GM10248 (cell line): ENCODE measurements at regions of chr2 and their contacts with region 1.

Region 1: DNA sequence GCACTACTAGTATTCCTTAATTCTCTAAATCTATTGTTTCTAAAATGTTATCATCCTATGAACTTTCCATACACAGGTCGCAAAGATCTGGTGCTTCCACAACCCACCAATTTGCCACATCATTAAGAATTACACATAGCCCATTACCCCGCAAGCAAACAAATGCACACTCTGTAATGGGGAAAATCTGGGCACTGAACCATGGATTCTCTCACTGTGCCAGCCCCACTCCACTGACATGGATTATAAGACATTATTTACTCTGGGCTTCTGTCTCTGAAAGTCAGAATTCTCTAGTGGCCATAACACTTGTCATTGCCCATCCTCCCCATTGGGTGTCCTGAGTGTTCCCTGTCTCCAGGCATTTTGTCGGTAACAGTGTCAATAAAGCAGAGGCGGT is 537.1 kb downstream of the EPHA4 start:
- DNase-seq: no peak
- CTCF ChIP-seq: no peak

Region 2: DNA sequence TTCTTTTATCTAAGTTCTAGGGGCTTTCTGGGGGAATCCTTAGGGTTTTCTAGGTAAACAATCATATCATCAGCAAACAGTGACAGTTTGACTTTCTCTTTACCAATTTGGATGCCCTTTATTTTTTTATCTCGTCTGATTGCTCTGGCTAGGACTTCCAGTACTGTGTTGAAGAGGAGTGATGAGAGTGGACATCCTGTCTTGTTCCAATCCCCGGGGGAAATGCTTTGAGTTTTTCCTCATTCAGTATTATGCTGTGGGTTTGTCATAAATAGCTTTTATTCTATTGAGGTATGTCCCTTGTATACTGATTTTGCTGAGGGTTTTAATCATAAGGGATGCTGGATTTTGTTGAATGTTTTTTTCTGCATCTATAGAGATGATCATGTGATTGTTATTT is 12.4 kb before region 1 on chr2:
- CTCF ChIA-PET with region 1: interaction called, 13 read pairs
- POLR2A ChIA-PET with region 1: no interaction called
- DNase-seq: no peak
- CTCF ChIP-seq: no peak

Region 3: DNA sequence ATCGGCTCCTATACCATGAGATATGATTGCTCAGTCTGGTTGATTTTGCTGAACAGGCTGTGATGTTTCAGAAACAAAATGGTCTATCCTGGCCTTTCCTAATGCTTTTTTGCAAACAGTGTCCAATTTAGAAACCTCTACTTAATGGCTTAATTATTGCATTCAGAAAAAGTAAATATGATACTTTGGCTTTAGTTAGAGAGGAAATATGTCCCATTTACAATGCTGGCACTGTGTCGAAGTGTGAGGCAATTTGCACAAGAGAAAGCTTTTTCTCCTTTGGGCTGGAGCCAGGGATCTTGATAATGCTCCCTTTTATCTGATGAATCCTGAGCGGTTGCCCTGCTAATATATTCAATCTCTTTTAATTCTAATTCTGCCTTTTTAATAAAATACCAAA is 118.3 kb after region 1 on chr2:
- CTCF ChIA-PET with region 1: no interaction called
- POLR2A ChIA-PET with region 1: no interaction called
- DNase-seq: no peak
- CTCF ChIP-seq: no peak

Region 4: GRCh38 chr2:221166292-221166691 is 131.3 kb after region 1 on chr2:
- CTCF ChIA-PET with region 1: no interaction called
- POLR2A ChIA-PET with region 1: no interaction called
- DNase-seq: no peak
- CTCF ChIP-seq: no peak